Endothelial cell of umbilical vein (primary cell): ENCODE measurements at regions of chr15 and their contacts with region 1.

Region 1: DNA sequence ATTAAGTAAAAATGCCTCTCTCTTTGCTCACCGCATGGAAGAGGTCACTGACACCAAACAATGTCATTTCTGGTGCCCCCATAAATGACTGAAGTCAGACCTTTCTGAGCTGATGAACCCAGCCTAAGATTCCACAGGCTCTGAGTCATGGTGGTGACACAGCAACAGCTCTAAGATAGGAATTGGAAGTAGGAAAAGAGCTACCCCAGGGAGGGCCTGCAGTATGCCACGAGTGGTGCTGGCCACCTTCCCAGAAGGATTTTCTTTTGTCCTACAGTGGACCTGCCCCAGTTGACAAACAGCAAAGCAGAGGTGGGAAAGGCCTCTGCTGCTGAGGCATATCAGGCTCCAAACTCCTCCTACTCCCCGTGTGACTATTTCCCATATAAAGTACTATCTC is 208.1 kb downstream of the MINAR1 start:
- DNase-seq: peak; percentile 74
- H3K4me3 ChIP-seq: no peak overlapping the region
- H3K27ac ChIP-seq: peak overlapping the region; percentile 15
- H3K4me1 ChIP-seq: peaks cover 33% of the 10 kb centered on the region
- H3K27me3 ChIP-seq: no peaks in the 10 kb centered on the region
- CTCF ChIP-seq: no peak
- POLR2A ChIP-seq: no peak

Region 2: DNA sequence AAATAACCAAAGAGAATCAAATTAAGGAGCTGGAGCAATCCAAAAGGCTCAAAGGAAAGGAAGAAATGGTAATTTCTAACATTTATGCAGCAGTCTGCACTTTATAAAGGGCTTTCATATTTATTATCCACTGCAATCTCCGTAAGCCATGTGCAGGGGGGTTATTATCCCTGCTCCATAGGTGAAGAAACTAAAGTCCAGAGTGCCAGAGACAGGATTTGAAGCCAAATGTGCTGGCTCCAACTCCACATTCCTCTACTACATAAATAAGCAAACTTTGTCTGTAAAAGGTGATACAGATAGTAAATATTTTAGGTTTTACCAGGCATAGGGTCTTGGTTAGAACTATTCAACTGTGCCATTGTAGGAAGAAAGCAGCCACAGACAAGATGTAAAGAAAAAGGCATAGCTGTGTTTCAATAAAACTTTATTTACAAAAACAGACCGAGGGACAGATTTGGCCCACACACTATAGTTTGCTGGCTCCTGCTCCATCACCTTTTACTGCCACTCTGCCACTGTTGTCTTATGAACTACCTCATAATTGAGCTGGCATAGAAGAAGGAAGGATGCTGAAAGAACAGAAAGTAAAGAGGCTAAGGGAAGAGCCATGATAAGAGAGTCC is 13.4 kb after region 1 on chr15:
- CTCF ChIA-PET with region 1: no interaction called
- POLR2A ChIA-PET with region 1: no interaction called
- dilution Hi-C with region 1: no loop called
- intact Hi-C with region 1: no loop called
- DNase-seq: no peak
- H3K4me3 ChIP-seq: no peak overlapping the region
- H3K27ac ChIP-seq: no peak overlapping the region
- H3K4me1 ChIP-seq: no peaks in the 10 kb centered on the region
- H3K27me3 ChIP-seq: peaks cover 2 to 4% of the 10 kb centered on the region in 2 experiments
- CTCF ChIP-seq: no peak
- POLR2A ChIP-seq: no peak

Region 3: DNA sequence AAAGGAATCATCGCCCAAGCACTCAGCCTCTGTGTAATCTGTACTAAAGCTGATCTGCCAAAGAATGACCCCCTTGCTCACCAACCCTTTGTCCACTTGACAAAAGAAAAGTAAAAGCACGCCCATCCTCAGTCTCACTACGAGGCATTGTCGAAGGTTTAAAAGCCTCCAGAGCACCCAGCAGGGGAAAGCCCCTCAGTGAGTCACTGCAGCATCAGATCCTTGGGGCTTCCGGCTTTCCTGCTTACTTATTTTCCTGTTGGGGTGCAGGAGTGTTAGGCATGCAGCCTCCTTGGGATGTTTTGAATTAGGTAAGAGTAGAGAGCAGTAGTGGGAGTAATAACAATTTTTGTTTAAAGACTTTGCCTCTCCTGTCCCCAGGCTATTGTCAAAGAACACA is 40.5 kb after region 1 on chr15:
- CTCF ChIA-PET with region 1: interaction called, 4 read pairs
- POLR2A ChIA-PET with region 1: no interaction called
- dilution Hi-C with region 1: no loop called
- intact Hi-C with region 1: loop called (anchors 2 kb)
- DNase-seq: peak; percentile 52
- H3K4me3 ChIP-seq: no peak overlapping the region
- H3K27ac ChIP-seq: peak overlapping the region; percentile 35
- H3K4me1 ChIP-seq: peaks cover 16% of the 10 kb centered on the region
- H3K27me3 ChIP-seq: no peaks in the 10 kb centered on the region
- CTCF ChIP-seq: no peak
- POLR2A ChIP-seq: no peak